OCI-LY7 (cell line): ENCODE measurements at regions of chr1 and their contacts with region 1.

Region 1: GRCh38 chr1:206912445-206913095 is 9.2 kb downstream of the FCMR start:
- DNase-seq: peak; percentile 84
- H3K4me3 ChIP-seq: no peak overlapping the region
- H3K27ac ChIP-seq: no peak overlapping the region
- H3K4me1 ChIP-seq: no peaks in the 10 kb centered on the region
- CTCF ChIP-seq: peak; percentile 90

Region 2: DNA sequence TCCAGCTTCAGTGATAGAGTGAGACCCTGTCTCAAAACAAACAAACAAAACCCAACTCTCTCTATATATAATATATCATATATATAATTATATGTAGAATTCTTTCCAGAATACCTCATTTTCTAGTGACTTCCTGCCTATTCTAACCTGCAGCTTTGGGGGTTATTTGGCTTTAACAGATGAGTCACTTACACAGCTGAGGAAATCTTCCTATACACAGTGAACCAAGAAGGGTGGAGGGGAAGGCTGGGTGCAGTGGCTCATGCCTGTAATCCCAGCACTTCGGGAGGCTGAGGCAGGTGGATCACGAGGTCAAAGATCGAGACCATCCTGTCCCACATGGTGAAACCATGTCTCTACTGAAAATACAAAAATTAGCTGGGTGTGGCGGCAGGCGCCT is 1146.5 kb before region 1 on chr1:
- CTCF ChIA-PET with region 1: no interaction called
- POLR2A ChIA-PET with region 1: no interaction called
- intact Hi-C with region 1: no loop called
- DNase-seq: no peak
- H3K4me3 ChIP-seq: no peak overlapping the region
- H3K27ac ChIP-seq: no peak overlapping the region
- H3K4me1 ChIP-seq: no peaks in the 10 kb centered on the region
- CTCF ChIP-seq: no peak

Region 3: DNA sequence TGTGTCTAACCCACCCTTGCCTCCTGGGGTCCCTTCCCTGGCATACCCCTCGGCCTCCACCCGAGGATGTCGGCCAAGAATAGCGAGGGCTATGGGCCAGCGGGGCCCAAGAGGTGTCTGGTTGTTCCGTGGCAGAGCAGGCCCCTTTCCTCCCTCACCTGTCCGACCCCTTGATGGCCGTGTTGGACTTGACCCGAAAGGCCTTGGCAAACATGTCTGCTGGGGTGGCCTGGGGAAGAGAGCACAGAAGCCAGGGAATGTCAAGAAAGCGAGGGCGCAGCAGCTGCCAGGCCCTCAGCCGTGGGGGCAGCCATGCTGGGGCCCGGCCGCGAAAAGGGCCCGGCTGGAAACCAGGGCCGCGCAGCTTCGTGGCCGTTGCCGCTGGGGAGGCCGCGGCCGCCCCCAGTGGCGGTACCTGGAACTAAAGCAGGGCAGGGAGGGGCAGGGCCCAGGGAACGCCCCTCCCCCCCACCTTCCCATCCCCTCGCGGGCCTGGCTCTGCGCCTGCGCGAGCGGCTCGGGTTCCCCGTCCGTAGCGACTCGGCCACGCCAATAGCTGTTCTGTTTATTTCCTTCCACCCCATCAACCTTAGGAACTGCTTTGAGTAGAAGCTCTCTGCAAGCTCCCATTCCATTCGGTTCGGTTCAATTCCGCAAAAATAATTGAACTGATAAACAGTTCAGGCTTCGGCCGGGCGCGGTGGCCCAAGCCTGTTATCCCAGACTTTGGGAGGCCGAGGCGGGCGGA is 300.3 kb before region 1 on chr1 and contains the start of gene EIF2D:
- CTCF ChIA-PET with region 1: interaction called, 3 read pairs
- POLR2A ChIA-PET with region 1: no interaction called
- intact Hi-C with region 1: loop called (anchors 2 kb)
- DNase-seq: peak; percentile 96
- H3K4me3 ChIP-seq: peak within 1 kb of the TSS; percentile 72
- H3K27ac ChIP-seq: peak within 1 kb of the TSS; percentile 27
- H3K4me1 ChIP-seq: peaks cover 13% of the 10 kb centered on the region
- CTCF ChIP-seq: peak; percentile 82
- total RNA-seq, gene EIF2D: 85.4 and 89.3 TPM in 2 replicates

Region 4: DNA sequence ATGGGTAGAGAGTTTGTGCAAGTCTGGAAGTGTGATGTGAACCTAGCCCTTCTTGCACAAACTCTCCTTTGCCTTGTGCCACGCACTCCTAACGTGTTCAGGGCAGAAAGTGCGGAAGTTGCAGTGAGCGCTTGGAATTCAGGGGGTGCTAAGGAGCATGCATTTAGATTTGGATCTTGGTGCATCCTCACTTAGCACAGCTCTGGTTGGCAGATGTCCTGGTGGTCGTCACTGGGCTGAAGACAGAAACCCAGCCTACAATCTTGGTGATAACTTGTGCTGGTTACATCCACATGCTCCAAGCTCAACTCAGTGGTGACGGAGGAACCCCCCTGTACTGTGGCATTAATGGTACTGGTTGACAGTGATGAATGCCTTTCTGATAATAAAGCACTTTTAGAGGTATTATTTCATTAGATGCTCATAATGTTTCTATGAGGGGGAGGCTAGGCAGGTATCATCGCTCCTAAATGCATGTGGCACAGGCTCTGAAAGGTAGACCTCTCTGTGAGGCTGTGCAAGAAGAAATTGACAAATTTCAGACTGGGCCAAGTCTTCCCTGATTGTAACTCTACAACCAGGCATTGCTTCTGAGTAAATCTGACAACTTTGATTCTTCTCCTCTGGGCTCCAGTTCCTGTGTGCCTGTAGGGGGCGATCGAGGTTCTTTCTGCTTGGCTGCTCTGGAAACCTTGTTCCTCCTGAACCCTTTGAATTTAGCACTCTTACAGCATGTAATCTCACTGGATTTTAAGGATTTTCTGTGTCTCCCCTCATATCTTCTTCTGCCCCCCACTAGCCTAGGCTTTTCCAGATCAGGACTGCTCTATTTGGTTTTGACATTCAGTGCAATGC is 187.2 kb before region 1 on chr1:
- CTCF ChIA-PET with region 1: interaction called, 4 read pairs
- POLR2A ChIA-PET with region 1: no interaction called
- intact Hi-C with region 1: loop called (anchors 1 kb)
- DNase-seq: peak; percentile 68
- H3K4me3 ChIP-seq: no peak overlapping the region
- H3K27ac ChIP-seq: no peak overlapping the region
- H3K4me1 ChIP-seq: peaks cover 13% of the 10 kb centered on the region
- CTCF ChIP-seq: peak; percentile 84

Region 5: GRCh38 chr1:206808615-206809014 is 104.0 kb before region 1 on chr1:
- CTCF ChIA-PET with region 1: interaction called, 4 read pairs
- POLR2A ChIA-PET with region 1: no interaction called
- intact Hi-C with region 1: loop called (anchors 1 kb)
- DNase-seq: peak; percentile 71
- H3K4me3 ChIP-seq: no peak overlapping the region
- H3K27ac ChIP-seq: no peak overlapping the region
- H3K4me1 ChIP-seq: peaks cover 1% of the 10 kb centered on the region
- CTCF ChIP-seq: peak; percentile 74

Region 6: DNA sequence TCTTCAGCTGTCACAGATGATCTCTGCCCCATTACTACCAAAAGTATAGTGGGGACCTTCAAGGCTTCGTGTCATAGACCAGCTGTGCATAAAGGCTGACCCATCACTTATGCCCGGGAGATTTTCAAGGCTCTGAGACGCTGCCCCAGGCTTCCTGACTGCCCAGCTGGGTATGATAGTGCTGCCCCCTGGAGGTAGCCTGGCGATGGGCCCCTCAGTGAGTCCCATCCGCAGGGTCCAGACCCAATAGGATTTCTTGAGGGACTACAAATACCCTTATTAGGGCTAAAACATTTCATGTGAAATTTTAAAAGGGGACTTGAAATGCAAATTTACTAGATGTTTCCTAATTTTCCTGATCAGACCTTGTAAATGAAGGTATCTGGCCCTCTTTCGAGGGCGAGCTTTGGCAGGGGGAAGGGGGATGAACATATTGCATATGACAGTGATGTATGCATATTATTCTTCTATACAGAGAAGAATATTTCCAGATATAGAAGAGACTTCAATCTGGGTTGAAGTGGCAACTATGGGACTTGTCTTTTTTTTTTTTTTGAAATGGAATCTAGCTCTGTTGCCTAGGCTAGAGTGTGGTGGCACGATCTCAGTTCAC is 20.9 kb after region 1 on chr1:
- CTCF ChIA-PET with region 1: interaction called, 4 read pairs
- POLR2A ChIA-PET with region 1: interaction called, 4 read pairs
- intact Hi-C with region 1: loop called (anchors 1 kb)
- DNase-seq: peak; percentile 66
- H3K4me3 ChIP-seq: no peak overlapping the region
- H3K27ac ChIP-seq: no peak overlapping the region
- H3K4me1 ChIP-seq: peaks cover 17% of the 10 kb centered on the region
- CTCF ChIP-seq: peak; percentile 90